CD4-positive, alpha-beta T cell (primary cell): ENCODE measurements at regions of chr19 and their contacts with region 1.

Region 1: GRCh38 chr19:43619262-43620060 is at the start of gene ZNF428:
- DNase-seq: peak; percentile 69 to 95 (median 82)
- ATAC-seq: peak; percentile 84
- H3K4me3 ChIP-seq: peak within 1 kb of the TSS; percentile 100
- H3K4me3 Mint-ChIP-seq: peak within 1 kb of the TSS; percentile 98
- H3K27ac ChIP-seq: peak within 1 kb of the TSS; percentile 91 to 92
- H3K27ac Mint-ChIP-seq: peak within 1 kb of the TSS; percentile 98
- H3K4me1 ChIP-seq: peaks cover 26% of the 10 kb centered on the region
- H3K4me1 Mint-ChIP-seq: peaks cover 55% of the 10 kb centered on the region
- H3K27me3 ChIP-seq: no peaks in the 10 kb centered on the region
- H3K27me3 Mint-ChIP-seq: no peaks in the 10 kb centered on the region
- CTCF ChIP-seq: no peak
- total RNA-seq, gene ZNF428: 22.3 to 24.8 TPM

Region 2: DNA sequence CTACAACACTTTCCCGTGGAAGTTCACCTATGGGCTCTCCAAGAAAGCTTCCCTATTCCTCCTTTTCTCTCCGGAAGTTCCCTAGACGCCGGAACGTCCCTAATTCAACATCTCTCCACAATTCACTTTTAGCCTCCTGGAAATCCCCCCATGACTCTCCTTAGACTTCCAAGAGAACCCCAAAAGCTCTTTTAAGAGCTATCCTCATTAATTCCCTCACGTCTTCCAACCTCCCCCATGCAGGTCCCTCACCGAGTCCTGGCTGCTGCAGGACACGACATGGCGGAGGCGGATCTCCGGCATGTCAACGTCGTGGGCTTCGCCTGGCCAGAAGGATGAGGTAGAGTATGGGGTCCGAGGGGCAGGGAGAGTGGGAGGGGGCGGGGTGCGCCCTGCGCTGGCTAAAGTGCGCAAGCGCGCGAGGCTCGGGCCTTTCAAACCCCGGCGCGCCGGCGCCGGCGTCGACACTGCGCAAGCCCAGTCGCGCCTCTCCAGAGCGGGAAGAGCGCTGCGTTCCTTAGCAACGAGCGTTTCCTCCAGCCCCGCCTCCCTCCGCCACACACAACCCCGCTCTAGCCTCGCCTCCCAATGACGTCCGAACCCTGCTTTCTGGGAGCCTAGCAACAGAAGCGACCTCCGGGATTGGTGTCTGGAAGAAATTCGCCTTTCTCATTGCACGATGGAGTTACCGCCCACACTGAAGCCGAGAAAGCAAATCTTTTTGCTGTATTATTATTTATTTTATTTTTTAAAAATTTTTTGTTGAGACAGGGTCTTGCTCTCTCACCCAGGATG is 44.1 kb before region 1 on chr19 and contains the starts of genes PINLYP and XRCC1:
- CTCF ChIA-PET with region 1: no interaction called
- POLR2A ChIA-PET with region 1: no interaction called
- intact Hi-C with region 1: loop called in 1 of 2 experiments (anchors 1 kb)
- DNase-seq: peak; percentile 93 to 100 (median 96)
- ATAC-seq: peak; percentile 98
- H3K4me3 ChIP-seq: peak within 1 kb of the TSS; percentile 90
- H3K4me3 Mint-ChIP-seq: peak within 1 kb of the TSS; percentile 98
- H3K27ac ChIP-seq: peak within 1 kb of the TSS; percentile 81 to 94
- H3K27ac Mint-ChIP-seq: peak within 1 kb of the TSS; percentile 96
- H3K4me1 ChIP-seq: peaks cover 33% of the 10 kb centered on the region
- H3K4me1 Mint-ChIP-seq: peaks cover 58% of the 10 kb centered on the region
- H3K27me3 ChIP-seq: no peaks in the 10 kb centered on the region
- H3K27me3 Mint-ChIP-seq: no peaks in the 10 kb centered on the region
- CTCF ChIP-seq: no peak
- total RNA-seq, gene PINLYP: not detected
- total RNA-seq, gene XRCC1: 25.1 to 26.2 TPM

Region 3: GRCh38 chr19:43675269-43675879 is 55.9 kb after region 1 on chr19:
- CTCF ChIA-PET with region 1: no interaction called
- POLR2A ChIA-PET with region 1: no interaction called
- intact Hi-C with region 1: no loop called
- DNase-seq: peak in 2 of 14 experiments; percentile 40 to 54
- ATAC-seq: no peak
- H3K4me3 ChIP-seq: no peak overlapping the region
- H3K4me3 Mint-ChIP-seq: no peak overlapping the region
- H3K27ac ChIP-seq: no peak overlapping the region
- H3K27ac Mint-ChIP-seq: no peak overlapping the region
- H3K4me1 ChIP-seq: peaks cover 7% of the 10 kb centered on the region
- H3K4me1 Mint-ChIP-seq: peaks cover 6% of the 10 kb centered on the region
- H3K27me3 ChIP-seq: no peaks in the 10 kb centered on the region
- H3K27me3 Mint-ChIP-seq: no peaks in the 10 kb centered on the region
- CTCF ChIP-seq: no peak